K562 (cell line): ENCODE measurements at regions of chr12 and their contacts with region 1.

Region 1: GRCh38 chr12:56286044-56286830 is 13.9 kb downstream of the CS start:
- DNase-seq: no peak
- ATAC-seq: no peak
- H3K4me3 ChIP-seq: no peak overlapping the region
- H3K27ac ChIP-seq: no peak overlapping the region
- H3K4me1 ChIP-seq: no peaks in the 10 kb centered on the region
- H3K27me3 ChIP-seq: no peaks in the 10 kb centered on the region
- CTCF ChIP-seq: no peak
- EP300 ChIP-seq: no peak
- POLR2A ChIP-seq: no peak
- RAD21 ChIP-seq: no peak

Region 2: GRCh38 chr12:56299853-56300643 is 13.8 kb after region 1 on chr12 and contains the start of gene CS:
- CTCF ChIA-PET with region 1: no interaction called
- POLR2A ChIA-PET with region 1: interaction called, 18 read pairs
- in situ Hi-C with region 1: no loop called
- intact Hi-C with region 1: loop called (anchors 2 kb)
- DNase-seq: peak; percentile 96 to 99 (median 97)
- ATAC-seq: peak; percentile 94
- H3K4me3 ChIP-seq: peak within 1 kb of the TSS; percentile 64
- H3K27ac ChIP-seq: peak within 1 kb of the TSS; percentile 98
- H3K4me1 ChIP-seq: peaks cover 22 to 42% of the 10 kb centered on the region in 2 experiments
- H3K27me3 ChIP-seq: no peaks in the 10 kb centered on the region
- CTCF ChIP-seq: no peak
- EP300 ChIP-seq: peak; percentile 16; the same call in 1 of the 2 replicates
- POLR2A ChIP-seq: peak; percentile 95
- RAD21 ChIP-seq: no peak
- polyA plus RNA-seq, gene CS: 99.9 to 239 TPM

Region 3: GRCh38 chr12:56462565-56462964 is 176.3 kb after region 1 on chr12:
- CTCF ChIA-PET with region 1: interaction called, 10 read pairs
- POLR2A ChIA-PET with region 1: no interaction called
- in situ Hi-C with region 1: no loop called
- intact Hi-C with region 1: no loop called
- DNase-seq: no peak
- ATAC-seq: no peak
- H3K4me3 ChIP-seq: no peak overlapping the region
- H3K27ac ChIP-seq: no peak overlapping the region
- H3K4me1 ChIP-seq: peaks cover 10 to 11% of the 10 kb centered on the region in 2 experiments; a peak in 4 of 5 replicates
- H3K27me3 ChIP-seq: no peaks in the 10 kb centered on the region
- CTCF ChIP-seq: no peak
- EP300 ChIP-seq: no peak
- POLR2A ChIP-seq: no peak
- RAD21 ChIP-seq: no peak